ENCODE measurements at regions of chr4 and their contacts with region 1.

Region 1: DNA sequence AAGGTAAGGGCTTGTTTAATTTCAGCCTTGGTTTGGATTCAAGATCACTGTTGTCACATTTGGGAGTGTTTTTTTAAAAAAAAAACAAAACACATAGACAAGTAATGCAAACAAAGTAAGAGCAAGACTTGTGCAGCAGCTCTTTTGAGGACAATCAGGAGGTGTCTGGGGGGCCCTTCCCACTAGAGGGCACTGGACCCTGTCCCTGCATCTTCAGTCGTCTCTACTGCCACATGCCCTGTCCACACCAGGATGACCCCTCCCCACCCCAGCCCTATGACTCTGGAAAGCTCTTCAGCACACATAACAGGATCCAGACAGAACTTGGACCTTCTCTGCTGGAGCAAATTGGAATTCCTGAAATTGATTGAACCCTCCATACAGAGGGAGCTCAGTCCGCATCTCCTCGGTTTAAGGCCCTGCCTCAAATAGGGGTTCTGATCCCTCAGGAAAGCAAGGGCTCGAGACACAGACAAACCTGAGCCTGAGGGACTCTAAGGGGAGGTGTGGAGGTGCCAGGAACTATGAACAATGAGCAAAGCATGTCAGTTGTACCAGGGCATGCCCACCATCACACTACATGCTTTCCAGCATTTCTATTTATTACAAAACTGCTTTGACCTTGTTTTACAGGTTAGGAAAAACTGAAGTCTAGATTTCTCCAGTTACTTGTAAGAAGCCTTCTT is 70.9 kb downstream of the USP46 start:
- DNase-seq: peak; percentile 15 to 70
- H3K4me3 ChIP-seq: no peak overlapping the region
- H3K27ac ChIP-seq: no peak overlapping the region
- H3K4me1 ChIP-seq: no peaks in the 10 kb centered on the region
- H3K27me3 ChIP-seq: no peaks in the 10 kb centered on the region
- CTCF ChIP-seq: peak; percentile 60 to 85 (median 79)
- EP300 ChIP-seq: no peak
- POLR2A ChIP-seq: no peak
- RAD21 ChIP-seq: peak; percentile 72 to 77

Region 2: GRCh38 chr4:52059372-52059771 is 528.9 kb before region 1 on chr4:
- CTCF ChIA-PET with region 1: no interaction called
- POLR2A ChIA-PET with region 1: no interaction called
- DNase-seq: no peak
- H3K4me3 ChIP-seq: no peak overlapping the region
- H3K27ac ChIP-seq: no peak overlapping the region
- H3K4me1 ChIP-seq: no peaks in the 10 kb centered on the region
- H3K27me3 ChIP-seq: no peaks in the 10 kb centered on the region
- CTCF ChIP-seq: no peak
- EP300 ChIP-seq: no peak
- POLR2A ChIP-seq: no peak
- RAD21 ChIP-seq: no peak

Region 3: GRCh38 chr4:52576857-52577623 is 11.2 kb before region 1 on chr4:
- CTCF ChIA-PET with region 1: interaction called, 10 read pairs
- POLR2A ChIA-PET with region 1: interaction called, 6 read pairs
- DNase-seq: no peak
- H3K4me3 ChIP-seq: no peak overlapping the region
- H3K27ac ChIP-seq: no peak overlapping the region
- H3K4me1 ChIP-seq: no peaks in the 10 kb centered on the region
- H3K27me3 ChIP-seq: no peaks in the 10 kb centered on the region
- CTCF ChIP-seq: no peak
- EP300 ChIP-seq: no peak
- POLR2A ChIP-seq: no peak
- RAD21 ChIP-seq: no peak

Region 4: GRCh38 chr4:52659001-52659721 is 70.9 kb after region 1 on chr4 and contains the start of gene USP46:
- CTCF ChIA-PET with region 1: interaction called, 5 read pairs
- POLR2A ChIA-PET with region 1: interaction called, 20 read pairs
- DNase-seq: peak in 1 of 2 experiments; percentile 74
- H3K4me3 ChIP-seq: peak within 1 kb of the TSS; percentile 73 to 98 (median 87)
- H3K27ac ChIP-seq: peak within 1 kb of the TSS; percentile 72; the same call in 1 of the 2 replicates
- H3K4me1 ChIP-seq: peaks cover 0 to 15% (median 9%) of the 10 kb centered on the region in 4 experiments; a peak in 6 of 7 replicates
- H3K27me3 ChIP-seq: peaks cover 0 to 5% (median 2%) of the 10 kb centered on the region in 4 experiments; a peak in 4 of 7 replicates
- CTCF ChIP-seq: no peak
- EP300 ChIP-seq: no peak
- POLR2A ChIP-seq: peak; percentile 44 to 51
- RAD21 ChIP-seq: no peak
- total RNA-seq, gene USP46: 53.4 and 62.4 TPM in 2 replicates